ENCODE measurements at regions of chr15 and their contacts with region 1.

Region 1: GRCh38 chr15:74635228-74635627 is 19.6 kb downstream of the CLK3 start:
- DNase-seq: no peak
- H3K4me3 ChIP-seq: no peak overlapping the region
- H3K27me3 ChIP-seq: no peaks in the 10 kb centered on the region
- CTCF ChIP-seq: peak; percentile 84

Region 2: DNA sequence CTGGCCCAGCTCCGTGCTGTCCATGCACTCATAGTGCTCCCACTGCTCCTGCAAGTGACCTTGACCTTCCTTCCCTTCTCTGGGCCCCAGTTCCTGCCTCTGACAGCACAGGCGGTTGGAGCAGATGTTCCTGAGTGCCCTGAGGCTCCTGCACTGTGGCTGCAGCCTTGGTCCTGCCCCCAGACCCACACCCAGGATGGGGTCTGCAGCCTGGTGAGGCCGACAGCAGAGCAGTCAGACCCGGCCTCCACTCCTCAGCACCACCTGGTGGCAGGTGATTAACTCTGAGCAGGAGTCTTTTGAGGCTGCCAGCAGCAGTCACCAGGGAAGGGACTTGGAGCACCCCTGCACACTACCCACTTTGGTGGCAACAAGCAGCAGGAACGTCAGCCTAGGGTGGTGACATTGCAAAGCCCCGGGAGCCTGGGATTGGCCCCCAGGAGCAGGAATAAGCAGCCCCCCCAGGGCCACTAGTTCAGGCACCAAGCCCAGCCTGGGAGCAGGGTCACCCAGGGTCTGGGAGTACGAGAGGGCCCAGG is 332.3 kb before region 1 on chr15:
- CTCF ChIA-PET with region 1: no interaction called
- POLR2A ChIA-PET with region 1: no interaction called
- DNase-seq: no peak
- H3K4me3 ChIP-seq: no peak overlapping the region
- H3K27me3 ChIP-seq: peaks cover 29% of the 10 kb centered on the region
- CTCF ChIP-seq: peak; percentile 72

Region 3: DNA sequence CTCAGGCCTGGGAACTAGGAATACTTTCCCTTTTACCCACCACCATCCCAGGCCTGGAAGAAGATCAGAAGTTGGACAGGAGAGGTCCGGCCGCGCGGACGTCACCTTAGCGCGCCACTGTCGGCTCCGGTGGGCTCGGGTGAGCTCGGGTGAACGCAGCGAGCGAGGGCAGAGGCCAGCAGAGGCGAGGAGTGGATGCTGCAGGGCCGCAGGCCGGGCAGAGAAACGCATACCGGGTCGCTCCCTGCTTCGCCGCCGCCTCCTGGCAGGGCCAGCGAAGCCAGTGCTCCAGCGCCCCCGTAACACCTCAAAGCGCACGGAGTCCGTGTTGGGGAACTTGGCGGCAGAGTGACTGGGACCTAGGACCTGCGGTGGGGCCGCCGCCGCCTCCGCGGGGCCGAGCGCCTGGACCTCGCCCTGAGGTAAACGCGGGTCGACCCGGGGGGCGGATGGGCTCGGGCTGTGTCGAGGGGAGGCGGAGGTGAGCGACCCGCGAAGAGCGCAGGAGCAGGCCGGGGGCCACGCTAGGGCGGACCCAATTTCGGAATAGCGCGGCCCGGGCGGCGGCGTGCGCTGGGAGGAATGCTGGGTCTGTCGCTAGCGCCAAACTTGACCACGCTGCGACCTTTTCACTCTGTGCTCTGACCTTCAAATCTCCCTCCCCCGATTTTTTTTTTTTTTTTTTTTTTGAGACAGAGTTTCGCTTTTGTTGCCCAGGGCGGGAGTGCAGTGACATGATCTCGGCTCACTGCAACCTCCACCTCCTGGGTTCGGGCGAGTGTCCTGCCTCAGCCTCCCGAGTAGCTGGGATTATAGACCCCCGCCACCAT is 269.4 kb before region 1 on chr15:
- CTCF ChIA-PET with region 1: interaction called, 17 read pairs
- POLR2A ChIA-PET with region 1: no interaction called
- DNase-seq: no peak
- H3K4me3 ChIP-seq: peak overlapping the region; percentile 56
- H3K27me3 ChIP-seq: no peaks in the 10 kb centered on the region
- CTCF ChIP-seq: no peak

Region 4: DNA sequence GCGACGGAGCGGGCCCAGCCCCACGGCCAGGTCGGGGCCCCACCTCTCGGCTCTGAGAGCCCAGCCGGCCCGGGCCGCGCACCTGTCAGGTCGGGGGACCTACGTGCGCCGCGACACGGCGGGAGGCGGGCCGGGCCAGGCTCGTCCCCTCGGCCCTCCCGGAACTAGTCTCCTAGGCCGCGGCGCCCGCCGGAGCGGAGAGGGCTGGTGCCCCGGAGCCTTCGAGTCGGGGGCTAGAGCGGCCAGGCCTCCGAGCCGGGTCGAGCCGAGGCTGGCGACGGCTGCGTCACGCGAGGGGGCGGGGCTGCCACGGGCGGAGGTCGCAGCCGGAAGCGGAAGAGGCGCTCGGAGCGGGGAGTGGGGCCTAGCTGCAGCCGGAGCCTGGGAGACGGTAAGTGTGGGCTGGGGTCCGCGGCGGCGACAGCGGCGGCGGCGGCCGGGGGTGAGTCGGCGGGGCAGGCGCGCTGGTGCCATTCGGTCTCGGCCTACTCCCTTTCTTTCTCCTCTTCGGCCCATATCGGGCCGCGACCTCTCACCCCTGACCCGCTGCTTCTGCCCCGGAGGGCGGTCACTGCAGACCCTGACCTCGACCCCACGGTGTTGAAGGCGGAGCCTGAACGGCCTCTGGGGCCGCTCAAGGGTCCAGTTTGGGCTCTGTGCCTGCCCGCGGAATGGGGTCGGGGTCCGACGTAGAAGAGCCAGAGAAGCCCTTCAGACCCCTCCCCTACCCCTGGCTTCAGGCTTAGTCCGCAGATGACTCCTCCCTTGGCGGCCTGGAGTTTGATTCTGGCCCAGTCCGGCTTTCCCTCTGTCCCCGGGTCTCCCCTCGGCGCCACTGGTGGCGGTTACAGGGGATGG is 19.5 kb before region 1 on chr15 and contains the start of gene CLK3:
- CTCF ChIA-PET with region 1: interaction called, 135 read pairs
- POLR2A ChIA-PET with region 1: no interaction called
- DNase-seq: peak; percentile 49
- H3K4me3 ChIP-seq: peak within 1 kb of the TSS; percentile 98
- H3K27me3 ChIP-seq: no peaks in the 10 kb centered on the region
- CTCF ChIP-seq: no peak
- polyA plus RNA-seq, gene CLK3: 45.2 and 58.3 TPM in 2 replicates

Region 5: GRCh38 chr15:74653426-74654123 is 18.3 kb after region 1 on chr15:
- CTCF ChIA-PET with region 1: interaction called, 21 read pairs
- POLR2A ChIA-PET with region 1: no interaction called
- DNase-seq: peak; percentile 63
- H3K4me3 ChIP-seq: no peak overlapping the region
- H3K27me3 ChIP-seq: no peaks in the 10 kb centered on the region
- CTCF ChIP-seq: no peak

Region 6: DNA sequence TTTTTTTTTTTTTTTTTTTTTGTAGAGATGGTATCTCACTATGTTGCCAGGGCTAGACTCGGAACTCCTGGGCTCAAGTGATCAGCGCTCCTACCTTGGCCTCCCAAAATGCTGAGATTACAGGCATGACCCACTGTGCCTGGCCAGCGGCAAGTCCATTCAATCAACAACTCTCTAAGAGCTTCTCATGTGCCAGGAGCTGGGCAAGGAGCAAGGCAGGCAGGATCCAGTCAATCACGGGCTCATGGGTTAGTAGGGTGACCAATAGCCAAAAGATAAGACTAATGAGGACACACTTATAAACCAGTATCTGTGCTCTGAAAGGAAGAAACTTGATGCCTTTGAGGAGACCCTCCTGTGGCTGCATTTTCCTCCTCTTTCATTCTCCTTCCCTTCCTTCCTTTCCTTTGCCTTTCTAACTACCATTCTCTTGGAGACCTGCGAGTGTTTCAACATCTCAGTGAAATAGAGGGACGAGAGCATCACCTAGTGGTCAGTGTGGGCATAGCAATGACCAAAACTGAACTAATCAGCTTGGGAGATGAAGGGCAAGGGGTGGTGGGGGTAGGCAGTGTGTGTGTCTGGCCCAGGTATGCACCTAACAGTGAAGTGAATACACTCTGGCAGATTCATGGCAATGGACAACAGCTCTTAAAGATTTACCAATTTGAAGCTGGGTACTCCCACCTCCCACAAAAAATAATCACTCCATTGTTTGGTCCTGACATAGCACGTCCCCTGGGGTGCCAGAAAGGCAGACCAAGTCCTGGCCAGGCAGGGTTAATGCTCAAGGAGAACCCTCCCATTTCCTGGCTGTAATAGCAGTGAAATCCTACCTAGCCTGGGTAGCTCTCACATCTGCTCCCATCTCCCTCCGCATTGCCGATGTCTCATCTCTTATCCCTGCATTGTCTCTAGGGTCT is 315.1 kb after region 1 on chr15:
- CTCF ChIA-PET with region 1: interaction called, 19 read pairs
- POLR2A ChIA-PET with region 1: no interaction called
- DNase-seq: no peak
- H3K4me3 ChIP-seq: no peak overlapping the region
- H3K27me3 ChIP-seq: no peaks in the 10 kb centered on the region
- CTCF ChIP-seq: peak; percentile 99

Measured in BJ (cell line).